ENCODE measurements at regions of chr3 and their contacts with region 1.

Region 1: DNA sequence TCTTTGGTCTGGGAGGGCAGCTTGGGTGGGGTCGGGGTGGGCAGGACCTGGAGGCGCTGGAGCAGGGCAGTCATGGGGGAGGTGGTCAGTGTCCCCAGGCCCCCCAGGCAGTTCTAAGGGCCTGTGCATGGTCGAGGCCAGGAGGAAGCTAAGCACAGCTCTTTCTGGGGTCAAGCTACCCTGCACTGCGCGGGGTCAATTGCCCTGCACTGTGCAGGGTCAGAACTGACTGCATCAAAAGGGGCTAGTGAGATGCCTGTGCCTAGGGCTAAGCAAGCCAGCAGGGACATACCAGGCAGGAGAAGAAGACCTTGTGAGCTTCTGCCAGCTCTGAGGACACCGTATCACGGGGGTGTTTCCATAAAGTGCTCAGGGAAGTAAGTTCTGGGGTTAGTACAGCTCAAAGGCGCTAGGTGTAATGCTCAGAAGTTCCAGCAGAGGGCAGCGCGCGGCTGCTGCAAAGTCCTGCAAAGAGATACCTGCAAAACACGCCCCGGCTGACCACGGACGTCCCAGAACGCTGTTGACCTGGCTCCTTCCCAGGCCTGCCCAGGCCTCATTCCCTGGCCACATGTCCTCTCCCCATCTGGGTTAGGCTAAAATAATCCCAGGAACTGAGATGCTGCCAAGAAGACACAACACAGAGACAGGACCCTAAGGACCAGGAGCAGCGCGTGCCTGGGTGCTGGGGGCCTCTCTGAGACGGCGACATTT is 18.8 kb upstream of the IQSEC1 start:
- DNase-seq: peak; percentile 80 to 83
- ATAC-seq: peak; percentile 79 to 94
- H3K4me3 ChIP-seq: no peak overlapping the region
- H3K27ac ChIP-seq: no peak overlapping the region
- H3K4me1 ChIP-seq: no peaks in the 10 kb centered on the region
- CTCF ChIP-seq: peak; percentile 85
- EP300 ChIP-seq: no peak
- POLR2A ChIP-seq: no peak
- RAD21 ChIP-seq: peak; percentile 89 to 92

Region 2: GRCh38 chr3:12782172-12782815 is 309.8 kb before region 1 on chr3:
- CTCF ChIA-PET with region 1: no interaction called
- POLR2A ChIA-PET with region 1: no interaction called
- DNase-seq: peak in 1 of 2 experiments; percentile 65
- ATAC-seq: peak; percentile 30 to 55; a peak in 2 of 6 replicates
- H3K4me3 ChIP-seq: no peak overlapping the region
- H3K27ac ChIP-seq: no peak overlapping the region
- H3K4me1 ChIP-seq: no peaks in the 10 kb centered on the region
- CTCF ChIP-seq: no peak
- EP300 ChIP-seq: no peak
- POLR2A ChIP-seq: no peak
- RAD21 ChIP-seq: no peak

Region 3: DNA sequence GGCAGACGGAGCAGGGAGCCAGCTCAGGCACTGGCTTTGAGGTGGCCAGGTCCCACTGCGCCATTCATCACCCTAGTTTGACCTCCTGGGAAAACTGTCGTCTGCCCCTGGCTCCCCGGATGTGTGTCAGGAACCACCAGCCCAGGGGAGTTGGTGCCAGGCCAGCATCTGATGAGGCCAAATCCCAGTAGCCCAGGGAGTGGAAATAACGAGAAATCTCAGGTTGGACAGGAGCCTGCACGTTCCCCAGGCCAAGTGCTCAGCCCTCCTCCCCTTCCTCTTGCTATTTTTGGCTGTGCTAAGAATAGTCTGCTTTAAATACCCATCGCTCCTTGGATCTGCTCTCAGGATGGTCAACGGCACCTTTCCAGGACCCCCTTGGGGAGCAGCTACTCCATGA is 157.6 kb before region 1 on chr3:
- CTCF ChIA-PET with region 1: no interaction called
- POLR2A ChIA-PET with region 1: no interaction called
- DNase-seq: no peak
- ATAC-seq: no peak
- H3K4me3 ChIP-seq: no peak overlapping the region
- H3K27ac ChIP-seq: no peak overlapping the region
- H3K4me1 ChIP-seq: no peaks in the 10 kb centered on the region
- CTCF ChIP-seq: no peak
- EP300 ChIP-seq: no peak
- POLR2A ChIP-seq: no peak
- RAD21 ChIP-seq: no peak

Region 4: DNA sequence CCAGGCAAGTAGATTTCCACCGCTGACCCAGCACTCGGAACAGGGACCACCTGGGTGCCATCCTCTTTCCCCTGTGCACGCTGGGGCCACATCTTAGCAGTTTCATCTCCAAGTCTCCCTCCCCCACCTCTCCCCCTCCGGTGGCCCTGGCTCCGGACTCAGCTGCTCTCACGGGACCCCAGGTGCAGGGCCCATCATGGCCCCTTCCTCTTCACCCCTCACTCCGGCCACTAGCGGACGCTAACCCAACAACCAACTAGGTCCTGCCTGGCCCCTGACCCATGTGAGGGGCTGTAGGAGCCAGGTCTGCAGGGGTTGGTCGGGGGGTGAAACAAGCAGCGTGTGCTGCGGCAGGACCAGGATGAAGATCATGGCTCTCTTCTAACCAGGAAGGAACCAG is 12.5 kb after region 1 on chr3:
- CTCF ChIA-PET with region 1: interaction called, 62 read pairs
- POLR2A ChIA-PET with region 1: no interaction called
- DNase-seq: no peak
- ATAC-seq: no peak
- H3K4me3 ChIP-seq: no peak overlapping the region
- H3K27ac ChIP-seq: no peak overlapping the region
- H3K4me1 ChIP-seq: peaks cover 22% of the 10 kb centered on the region
- CTCF ChIP-seq: no peak
- EP300 ChIP-seq: no peak
- POLR2A ChIP-seq: no peak
- RAD21 ChIP-seq: no peak

Region 5: GRCh38 chr3:13200946-13201345 is 108.9 kb after region 1 on chr3:
- CTCF ChIA-PET with region 1: interaction called, 10 read pairs
- POLR2A ChIA-PET with region 1: no interaction called
- DNase-seq: peak in 1 of 2 experiments; percentile 17
- ATAC-seq: peak in 1 of 2 experiments; percentile 18; a peak in 1 of 6 replicates
- H3K4me3 ChIP-seq: no peak overlapping the region
- H3K27ac ChIP-seq: no peak overlapping the region
- H3K4me1 ChIP-seq: no peaks in the 10 kb centered on the region
- CTCF ChIP-seq: no peak
- EP300 ChIP-seq: no peak
- POLR2A ChIP-seq: no peak
- RAD21 ChIP-seq: peak; percentile 27 to 31; a peak in 3 of 5 replicates

Region 6: GRCh38 chr3:13229273-13229949 is 137.4 kb after region 1 on chr3:
- CTCF ChIA-PET with region 1: interaction called, 19 read pairs
- POLR2A ChIA-PET with region 1: no interaction called
- DNase-seq: peak; percentile 53 to 58
- ATAC-seq: peak; percentile 92 to 95
- H3K4me3 ChIP-seq: no peak overlapping the region
- H3K27ac ChIP-seq: no peak overlapping the region
- H3K4me1 ChIP-seq: no peaks in the 10 kb centered on the region
- CTCF ChIP-seq: peak; percentile 40
- EP300 ChIP-seq: no peak
- POLR2A ChIP-seq: no peak
- RAD21 ChIP-seq: peak in 1 of 2 experiments; percentile 57; a peak in 2 of 5 replicates

Region 7: GRCh38 chr3:13324835-13325501 is 232.9 kb after region 1 on chr3:
- CTCF ChIA-PET with region 1: interaction called, 13 read pairs
- POLR2A ChIA-PET with region 1: no interaction called
- DNase-seq: no peak
- ATAC-seq: no peak
- H3K4me3 ChIP-seq: no peak overlapping the region
- H3K27ac ChIP-seq: no peak overlapping the region
- H3K4me1 ChIP-seq: no peaks in the 10 kb centered on the region
- CTCF ChIP-seq: no peak
- EP300 ChIP-seq: no peak
- POLR2A ChIP-seq: no peak
- RAD21 ChIP-seq: no peak

Region 8: DNA sequence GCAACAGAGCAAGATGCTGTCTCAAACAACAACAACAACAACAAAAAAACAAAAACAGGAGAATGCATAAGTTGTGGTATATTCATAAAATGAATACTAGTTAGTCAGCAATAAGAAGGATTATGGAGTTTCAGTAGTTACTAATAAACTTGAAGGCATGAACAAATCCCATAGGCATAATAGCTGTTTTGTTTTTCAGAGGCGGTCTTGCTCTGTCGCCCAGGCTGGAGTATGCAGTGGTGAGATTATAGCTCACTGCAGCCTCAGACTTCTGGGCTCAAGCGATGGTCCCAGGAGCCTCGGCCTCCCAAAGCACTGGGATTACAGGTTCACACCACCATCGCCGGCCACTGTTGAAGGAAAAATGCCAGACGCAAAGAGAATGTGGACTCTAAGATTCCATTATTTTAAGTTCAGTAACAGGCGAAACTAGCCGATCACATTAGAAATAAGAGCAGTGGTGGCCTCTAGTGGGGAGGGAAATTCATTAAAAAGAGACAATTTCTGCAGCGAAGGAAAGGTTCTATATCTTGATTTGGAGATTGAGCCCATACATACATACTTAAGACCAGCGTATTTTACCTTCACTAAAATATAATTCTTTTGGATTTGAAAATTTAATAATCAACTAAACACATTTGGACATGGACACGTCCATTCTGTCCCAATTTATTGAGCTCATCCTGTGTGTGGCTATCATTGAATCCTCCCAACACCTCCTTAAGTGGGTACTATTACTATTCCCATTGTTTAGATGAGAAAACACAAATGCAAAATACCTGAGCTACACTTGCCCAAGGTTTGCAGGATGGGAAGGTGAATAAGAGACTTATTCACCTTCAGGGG is 360.7 kb after region 1 on chr3:
- CTCF ChIA-PET with region 1: interaction called, 127 read pairs
- POLR2A ChIA-PET with region 1: interaction called, 7 read pairs
- DNase-seq: peak; percentile 55 to 66
- ATAC-seq: peak; percentile 70 to 74
- H3K4me3 ChIP-seq: peak overlapping the region; percentile 55
- H3K27ac ChIP-seq: peak overlapping the region; percentile 72 to 86
- H3K4me1 ChIP-seq: 0 out of 3 replicates have a peak, but pooled peaks cover 5% of the 10 kb centered on the region
- CTCF ChIP-seq: peak; percentile 85
- EP300 ChIP-seq: no peak
- POLR2A ChIP-seq: no peak
- RAD21 ChIP-seq: peak; percentile 83 to 84

Region 9: GRCh38 chr3:13648060-13649001 is 556.3 kb after region 1 on chr3:
- CTCF ChIA-PET with region 1: interaction called, 38 read pairs
- POLR2A ChIA-PET with region 1: no interaction called
- DNase-seq: peak; percentile 82 to 95
- ATAC-seq: peak; percentile 65 to 88
- H3K4me3 ChIP-seq: no peak overlapping the region
- H3K27ac ChIP-seq: peak overlapping the region in 1 of 2 experiments; percentile 50; a peak in 2 of 6 replicates
- H3K4me1 ChIP-seq: peaks cover 7% of the 10 kb centered on the region; the same call in 1 of the 3 replicates
- CTCF ChIP-seq: peak; percentile 95
- EP300 ChIP-seq: no peak
- POLR2A ChIP-seq: no peak
- RAD21 ChIP-seq: peak; percentile 98

Measured in A549 (cell line).